HCT116 (cell line): ENCODE measurements at regions of chr14 and their contacts with region 1.

Region 1: DNA sequence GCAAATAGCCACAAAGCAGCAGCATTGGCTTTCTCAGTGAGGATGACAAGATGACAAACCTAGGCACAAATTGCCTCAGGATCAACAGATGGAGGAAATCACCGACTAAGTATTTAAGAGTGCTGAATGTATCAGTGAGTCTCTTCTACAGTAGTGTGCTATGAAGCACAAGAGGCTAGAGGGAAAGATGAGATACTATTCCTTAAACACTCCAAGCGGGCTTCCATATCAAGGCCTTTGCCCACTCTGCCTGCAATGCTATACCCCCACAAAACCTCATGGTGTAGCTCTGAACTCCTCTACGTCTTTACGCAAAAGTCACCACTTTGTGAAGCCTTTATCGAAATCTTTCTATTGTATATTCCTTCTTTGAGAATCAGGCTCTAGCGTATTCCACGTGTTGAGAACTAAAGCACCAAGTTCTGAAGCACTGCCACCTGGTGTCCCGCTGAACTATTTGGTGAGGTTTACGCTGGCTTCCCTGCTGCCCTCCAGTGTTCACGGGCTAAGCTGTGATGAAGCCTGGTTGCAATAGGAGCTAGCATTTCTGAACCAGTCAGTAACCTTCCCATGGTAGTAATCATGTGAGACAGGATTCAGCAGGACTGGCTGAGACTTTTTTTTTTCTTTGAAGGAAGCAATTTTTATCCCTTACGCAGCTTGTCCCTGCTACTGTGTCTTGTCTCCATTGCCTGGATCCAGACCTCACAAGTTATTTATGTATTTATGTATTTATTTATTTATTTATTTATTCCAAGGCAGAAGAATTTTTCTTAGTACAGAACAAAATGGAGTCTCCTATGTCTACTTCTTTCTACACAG is 426.5 kb upstream of the OR4E1 start:
- DNase-seq: peak; percentile 61
- ATAC-seq: peak; percentile 99
- H3K4me3 ChIP-seq: no peak overlapping the region
- H3K27ac ChIP-seq: no peak overlapping the region
- H3K4me1 ChIP-seq: no peaks in the 10 kb centered on the region
- H3K27me3 ChIP-seq: peaks cover 28% of the 10 kb centered on the region
- CTCF ChIP-seq: peak; percentile 68 to 96 (median 76)
- POLR2A ChIP-seq: no peak
- RAD21 ChIP-seq: peak; percentile 36

Region 2: DNA sequence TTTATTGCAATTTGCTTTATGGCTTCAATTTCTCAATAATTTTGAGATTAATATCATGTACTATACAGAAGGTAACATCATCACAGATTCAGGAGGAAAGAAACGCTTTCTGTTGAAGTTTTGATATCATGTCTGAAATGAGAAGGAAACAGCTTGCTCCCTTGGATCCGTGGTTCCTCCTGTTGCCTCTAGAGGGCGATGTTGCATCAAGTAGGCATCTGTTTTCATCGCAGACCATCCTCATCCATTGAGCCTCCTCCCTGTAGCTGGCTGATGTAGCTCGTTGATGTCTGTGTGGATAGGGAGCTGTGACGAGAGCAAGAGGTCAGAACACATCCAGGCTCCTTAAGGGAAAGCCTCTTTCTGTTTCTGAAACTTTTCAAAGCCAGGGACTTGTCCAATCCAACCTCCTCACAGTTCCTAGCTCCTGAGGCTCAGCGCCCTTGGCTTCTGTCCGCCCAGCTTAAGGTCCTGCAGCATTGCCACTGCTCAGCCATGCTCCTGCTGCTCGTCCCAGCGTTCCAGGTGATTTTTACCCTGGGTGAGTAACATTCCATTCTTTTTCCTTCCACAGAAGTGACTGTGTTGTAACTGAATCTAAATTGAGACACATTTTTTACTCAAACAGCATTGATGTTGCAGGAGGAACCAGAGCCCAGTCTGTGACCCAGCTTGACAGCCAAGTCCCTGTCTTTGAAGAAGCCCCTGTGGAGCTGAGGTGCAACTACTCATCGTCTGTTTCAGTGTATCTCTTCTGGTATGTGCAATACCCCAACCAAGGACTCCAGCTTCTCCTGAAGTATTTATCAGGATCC is 121.8 kb before region 1 on chr14:
- CTCF ChIA-PET with region 1: interaction called, 23 read pairs
- POLR2A ChIA-PET with region 1: no interaction called
- RAD21 ChIA-PET with region 1: interaction called in 1 of 2 experiments, 3 read pairs
- intact Hi-C with region 1: no loop called
- DNase-seq: peak; percentile 16
- ATAC-seq: peak; percentile 78
- H3K4me3 ChIP-seq: no peak overlapping the region
- H3K27ac ChIP-seq: no peak overlapping the region
- H3K4me1 ChIP-seq: no peaks in the 10 kb centered on the region
- H3K27me3 ChIP-seq: peaks cover 26% of the 10 kb centered on the region
- CTCF ChIP-seq: peak in 2 of 3 experiments; percentile 93 to 94; a peak in 4 of 6 replicates
- POLR2A ChIP-seq: no peak
- RAD21 ChIP-seq: peak; percentile 31; the same call in 1 of the 2 replicates

Region 3: DNA sequence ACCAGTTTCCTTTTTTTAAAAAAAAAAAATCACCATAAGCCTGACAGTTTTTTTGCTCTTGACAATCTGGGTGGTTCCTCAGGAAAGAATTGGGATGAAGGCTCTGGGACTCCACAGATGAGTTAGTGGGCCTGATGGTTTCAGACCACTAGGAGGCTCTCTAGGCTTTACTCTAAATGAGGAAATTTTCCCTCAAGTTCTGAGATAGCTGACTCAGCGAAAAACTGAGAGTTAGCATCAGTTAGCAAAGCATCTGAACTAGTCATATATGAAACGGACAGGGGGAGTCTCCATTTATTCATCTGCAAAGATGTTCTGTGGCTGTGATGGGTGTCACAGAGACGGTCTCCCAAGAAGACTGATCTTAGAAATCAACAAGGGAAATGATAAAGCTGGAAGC is 112.2 kb before region 1 on chr14:
- CTCF ChIA-PET with region 1: interaction called, 14 read pairs
- POLR2A ChIA-PET with region 1: no interaction called
- RAD21 ChIA-PET with region 1: no interaction called
- intact Hi-C with region 1: no loop called
- DNase-seq: peak; percentile 45
- ATAC-seq: peak; percentile 80
- H3K4me3 ChIP-seq: no peak overlapping the region
- H3K27ac ChIP-seq: no peak overlapping the region
- H3K4me1 ChIP-seq: no peaks in the 10 kb centered on the region
- H3K27me3 ChIP-seq: peaks cover 24% of the 10 kb centered on the region; the same call in 1 of the 2 replicates
- CTCF ChIP-seq: peak; percentile 10 to 76 (median 69); a peak in 4 of 6 replicates
- POLR2A ChIP-seq: no peak
- RAD21 ChIP-seq: peak; percentile 14; the same call in 1 of the 2 replicates

Region 4: DNA sequence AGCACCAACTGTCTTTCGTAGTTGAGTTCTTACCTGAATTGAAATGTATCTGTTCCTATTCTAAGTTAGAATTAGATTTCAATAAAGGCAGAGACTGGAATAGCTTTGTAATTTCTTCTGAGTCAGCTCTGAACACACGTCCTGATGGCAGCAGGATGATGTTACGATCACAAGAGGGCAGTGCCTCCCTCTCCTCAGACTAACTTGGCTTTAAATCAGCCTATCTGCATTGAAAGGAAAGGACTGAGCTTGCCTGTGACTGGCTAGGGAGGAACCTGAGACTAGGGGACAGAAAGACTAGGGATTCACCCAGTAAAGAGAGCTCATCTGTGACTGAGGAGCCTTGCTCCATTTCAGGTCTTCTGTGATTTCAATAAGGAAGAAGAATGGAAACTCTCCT is 102.9 kb before region 1 on chr14:
- CTCF ChIA-PET with region 1: interaction called, 12 read pairs
- POLR2A ChIA-PET with region 1: no interaction called
- RAD21 ChIA-PET with region 1: no interaction called
- intact Hi-C with region 1: no loop called
- DNase-seq: peak; percentile 31
- ATAC-seq: peak; percentile 94
- H3K4me3 ChIP-seq: no peak overlapping the region
- H3K27ac ChIP-seq: no peak overlapping the region
- H3K4me1 ChIP-seq: no peaks in the 10 kb centered on the region
- H3K27me3 ChIP-seq: peaks cover 5% of the 10 kb centered on the region; the same call in 1 of the 2 replicates
- CTCF ChIP-seq: peak; percentile 8 to 42 (median 37); a peak in 4 of 6 replicates
- POLR2A ChIP-seq: no peak
- RAD21 ChIP-seq: no peak

Region 5: DNA sequence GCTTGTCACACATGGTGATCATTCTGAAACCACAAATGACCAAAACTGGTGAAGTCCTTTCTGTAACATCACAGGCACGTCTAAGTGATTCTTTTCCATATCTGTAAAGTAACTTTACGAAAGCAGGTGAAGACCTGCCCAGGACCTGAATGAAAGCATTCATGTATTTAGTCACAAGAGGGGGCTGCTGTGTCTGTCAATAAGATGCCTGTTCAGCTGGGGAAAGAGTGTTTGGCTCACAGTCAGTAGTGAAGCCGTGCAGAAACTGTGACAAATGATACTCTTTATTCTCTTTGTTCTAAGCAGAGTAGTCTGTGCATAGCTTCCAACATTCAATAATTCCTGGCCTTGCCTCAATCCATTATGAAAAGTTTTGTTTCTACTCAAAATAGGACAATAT is 53.0 kb before region 1 on chr14:
- CTCF ChIA-PET with region 1: interaction called, 10 read pairs
- POLR2A ChIA-PET with region 1: no interaction called
- RAD21 ChIA-PET with region 1: no interaction called
- intact Hi-C with region 1: no loop called
- DNase-seq: no peak
- ATAC-seq: peak; percentile 80
- H3K4me3 ChIP-seq: no peak overlapping the region
- H3K27ac ChIP-seq: no peak overlapping the region
- H3K4me1 ChIP-seq: no peaks in the 10 kb centered on the region
- H3K27me3 ChIP-seq: peaks cover 55% of the 10 kb centered on the region
- CTCF ChIP-seq: peak; percentile 22 to 57 (median 44); a peak in 4 of 6 replicates
- POLR2A ChIP-seq: no peak
- RAD21 ChIP-seq: no peak

Region 6: GRCh38 chr14:22084393-22085281 is 15.5 kb before region 1 on chr14:
- CTCF ChIA-PET with region 1: interaction called, 14 read pairs
- POLR2A ChIA-PET with region 1: no interaction called
- RAD21 ChIA-PET with region 1: interaction called in 1 of 2 experiments, 4 read pairs
- intact Hi-C with region 1: no loop called
- DNase-seq: peak; percentile 49
- ATAC-seq: peak; percentile 55; the same call in 1 of the 2 replicates
- H3K4me3 ChIP-seq: no peak overlapping the region
- H3K27ac ChIP-seq: no peak overlapping the region
- H3K4me1 ChIP-seq: no peaks in the 10 kb centered on the region
- H3K27me3 ChIP-seq: peaks cover 5% of the 10 kb centered on the region
- CTCF ChIP-seq: peak; percentile 32 to 76 (median 64); a peak in 5 of 6 replicates
- POLR2A ChIP-seq: no peak
- RAD21 ChIP-seq: peak; percentile 21